ENCODE measurements at regions of chr6 and their contacts with region 1.

Region 1: DNA sequence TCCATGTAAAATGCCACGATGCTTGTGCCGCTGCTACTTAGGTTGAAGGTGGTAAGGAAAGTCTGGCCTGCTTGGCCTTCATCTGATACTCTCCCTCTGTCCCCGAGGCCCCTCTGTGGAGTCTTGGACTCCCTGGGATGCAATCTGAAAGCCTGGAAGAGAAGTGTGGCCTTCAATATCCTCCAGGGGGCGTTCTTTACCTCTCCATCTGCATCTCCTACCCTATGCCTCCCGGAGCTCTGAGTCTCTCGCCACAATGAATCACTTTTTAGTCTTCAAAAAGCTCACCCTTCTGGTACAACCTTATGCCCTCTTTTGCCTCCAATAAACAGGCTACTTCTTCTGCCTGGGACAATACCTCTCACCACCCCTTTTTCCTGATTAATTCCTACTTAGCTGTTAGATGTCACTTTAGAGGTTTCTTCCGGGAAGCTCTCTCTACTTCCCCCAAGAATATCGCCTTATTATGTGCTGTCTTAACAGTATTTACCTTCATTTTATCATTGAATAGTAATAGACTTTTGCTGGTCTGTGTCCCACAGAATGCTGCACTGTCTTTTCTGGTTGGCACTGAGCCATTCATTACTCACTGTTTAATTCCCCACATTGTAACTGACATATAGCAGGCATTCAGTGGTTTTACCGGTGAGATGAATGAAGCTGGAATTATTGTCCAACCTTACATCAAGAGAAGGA is 13.9 kb upstream of the ATG5 start:
- DNase-seq: peak; percentile 35 to 68 (median 60)
- H3K4me3 ChIP-seq: peak overlapping the region in 1 of 3 experiments; percentile 42
- H3K4me3 Mint-ChIP-seq: peak overlapping the region; percentile 70 to 88
- H3K27ac ChIP-seq: no peak overlapping the region
- H3K27ac Mint-ChIP-seq: peak overlapping the region in 2 of 7 donors; percentile 33 to 45
- H3K4me1 ChIP-seq: no peaks in the 10 kb centered on the region
- H3K4me1 Mint-ChIP-seq: peaks cover 7% of the 10 kb centered on the region
- H3K27me3 ChIP-seq: no peaks in the 10 kb centered on the region
- H3K27me3 Mint-ChIP-seq: peaks cover 4 to 11% (median 5%) of the 10 kb centered on the region in 3 donors
- CTCF ChIP-seq: peak; percentile 83

Region 2: GRCh38 chr6:106372838-106373501 is 33.5 kb after region 1 on chr6:
- intact Hi-C with region 1: no loop called
- DNase-seq: no peak
- H3K4me3 ChIP-seq: no peak overlapping the region
- H3K4me3 Mint-ChIP-seq: no peak overlapping the region
- H3K27ac ChIP-seq: no peak overlapping the region
- H3K27ac Mint-ChIP-seq: no peak overlapping the region
- H3K4me1 ChIP-seq: no peaks in the 10 kb centered on the region
- H3K4me1 Mint-ChIP-seq: peaks cover 5% of the 10 kb centered on the region
- H3K27me3 ChIP-seq: peaks cover 2 to 4% of the 10 kb centered on the region in 2 donors
- H3K27me3 Mint-ChIP-seq: peaks cover 0 to 2% (median under 1%) of the 10 kb centered on the region in 3 donors
- CTCF ChIP-seq: no peak

Region 3: GRCh38 chr6:106421496-106421895 is 82.0 kb after region 1 on chr6:
- intact Hi-C with region 1: loop called in 1 of 2 experiments (anchors 10 kb)
- DNase-seq: no peak
- H3K4me3 ChIP-seq: no peak overlapping the region
- H3K4me3 Mint-ChIP-seq: no peak overlapping the region
- H3K27ac ChIP-seq: no peak overlapping the region
- H3K27ac Mint-ChIP-seq: no peak overlapping the region
- H3K4me1 ChIP-seq: peaks cover 3 to 5% of the 10 kb centered on the region in 2 donors
- H3K4me1 Mint-ChIP-seq: no peaks in the 10 kb centered on the region
- H3K27me3 ChIP-seq: no peaks in the 10 kb centered on the region
- H3K27me3 Mint-ChIP-seq: peaks cover 0 to 3% (median 2%) of the 10 kb centered on the region in 3 donors
- CTCF ChIP-seq: no peak

Region 4: GRCh38 chr6:106560996-106561685 is 221.7 kb after region 1 on chr6:
- intact Hi-C with region 1: loop called in 1 of 2 experiments (anchors 10 kb)
- DNase-seq: peak in 2 of 3 donors; percentile 60 to 76
- H3K4me3 ChIP-seq: peak overlapping the region in 1 of 3 experiments; percentile 53
- H3K4me3 Mint-ChIP-seq: no peak overlapping the region
- H3K27ac ChIP-seq: peak overlapping the region; percentile 41 to 84
- H3K27ac Mint-ChIP-seq: peak overlapping the region; percentile 56 to 95 (median 92)
- H3K4me1 ChIP-seq: peaks cover 36 to 45% of the 10 kb centered on the region in 2 donors
- H3K4me1 Mint-ChIP-seq: peaks cover 49% of the 10 kb centered on the region
- H3K27me3 ChIP-seq: no peaks in the 10 kb centered on the region
- H3K27me3 Mint-ChIP-seq: peaks cover 0 to 1% (median 0%) of the 10 kb centered on the region in 3 donors
- CTCF ChIP-seq: no peak

Region 5: DNA sequence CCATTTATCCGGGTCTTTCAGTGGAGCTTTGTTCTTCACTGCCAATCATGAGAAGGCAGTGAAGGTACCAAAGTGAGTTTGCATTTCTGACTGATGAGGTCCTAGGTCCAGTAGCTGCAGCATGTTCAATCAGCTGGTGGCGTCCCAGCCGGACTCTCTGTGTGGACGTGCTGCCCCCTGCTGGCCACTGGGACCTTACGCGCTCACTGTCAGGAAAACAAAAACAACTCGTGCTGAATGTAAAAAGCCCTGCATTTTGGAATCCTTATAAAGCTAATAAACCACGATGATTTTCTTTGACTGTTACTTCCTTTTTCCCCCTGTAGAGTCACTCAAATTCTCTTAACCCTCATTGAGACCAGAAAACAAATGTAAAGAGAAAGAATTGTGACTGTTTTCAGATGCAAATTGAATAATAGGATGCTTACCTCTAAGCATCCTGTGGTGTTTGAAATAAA is 640.0 kb after region 1 on chr6:
- intact Hi-C with region 1: loop called (anchors 5 kb)
- DNase-seq: peak; percentile 69 to 74 (median 70)
- H3K4me3 ChIP-seq: no peak overlapping the region
- H3K4me3 Mint-ChIP-seq: peak overlapping the region in 1 of 2 donors; percentile 26
- H3K27ac ChIP-seq: no peak overlapping the region
- H3K27ac Mint-ChIP-seq: no peak overlapping the region
- H3K4me1 ChIP-seq: peaks cover 7 to 12% of the 10 kb centered on the region in 2 donors
- H3K4me1 Mint-ChIP-seq: peaks cover 4% of the 10 kb centered on the region
- H3K27me3 ChIP-seq: peaks cover 22 to 36% of the 10 kb centered on the region in 2 donors
- H3K27me3 Mint-ChIP-seq: peaks cover 31 to 51% (median 38%) of the 10 kb centered on the region in 3 donors
- CTCF ChIP-seq: peak; percentile 87